A673 (cell line): ENCODE measurements at regions of chr1 and their contacts with region 1.

Region 1: DNA sequence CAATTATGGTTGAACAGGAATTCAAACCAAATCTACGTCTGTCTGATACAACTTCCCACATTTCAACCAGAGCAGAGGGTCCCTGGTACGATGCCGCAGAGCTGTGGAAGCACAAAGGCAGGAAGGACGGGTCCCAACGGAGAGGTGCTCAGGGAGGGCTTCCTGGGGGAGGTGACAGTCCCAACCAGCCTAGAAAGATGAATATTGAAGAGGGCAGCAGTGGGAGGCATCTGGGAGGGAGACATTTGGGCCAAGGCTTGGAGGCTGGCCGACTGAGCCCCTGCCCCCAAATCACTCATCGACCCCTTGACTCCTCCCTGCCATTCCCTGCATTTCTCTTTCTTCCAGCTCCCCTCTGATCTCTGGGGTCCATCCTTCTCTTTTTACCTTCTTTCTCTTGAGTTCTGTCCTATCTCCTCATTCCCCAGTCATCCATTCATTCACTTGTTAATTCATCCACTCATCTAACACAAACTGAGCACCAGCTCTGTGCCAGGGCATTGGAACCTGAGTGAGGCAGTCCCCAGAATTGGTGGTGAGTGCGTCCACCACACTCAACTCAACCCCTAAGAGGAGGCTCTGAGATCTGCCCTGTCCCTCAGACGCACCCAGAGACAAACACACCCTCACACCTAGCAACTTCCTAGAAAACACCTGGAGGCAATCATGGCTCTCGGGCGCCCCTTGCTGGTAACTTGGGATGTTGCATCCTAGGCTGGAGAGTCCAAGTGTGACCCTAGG is 13.2 kb upstream of the CELA3B start:
- DNase-seq: peak; percentile 66
- H3K4me3 ChIP-seq: no peak overlapping the region
- H3K27ac ChIP-seq: no peak overlapping the region
- H3K4me1 ChIP-seq: peaks cover 14% of the 10 kb centered on the region
- H3K27me3 ChIP-seq: no peaks in the 10 kb centered on the region
- CTCF ChIP-seq: peak; percentile 90

Region 2: DNA sequence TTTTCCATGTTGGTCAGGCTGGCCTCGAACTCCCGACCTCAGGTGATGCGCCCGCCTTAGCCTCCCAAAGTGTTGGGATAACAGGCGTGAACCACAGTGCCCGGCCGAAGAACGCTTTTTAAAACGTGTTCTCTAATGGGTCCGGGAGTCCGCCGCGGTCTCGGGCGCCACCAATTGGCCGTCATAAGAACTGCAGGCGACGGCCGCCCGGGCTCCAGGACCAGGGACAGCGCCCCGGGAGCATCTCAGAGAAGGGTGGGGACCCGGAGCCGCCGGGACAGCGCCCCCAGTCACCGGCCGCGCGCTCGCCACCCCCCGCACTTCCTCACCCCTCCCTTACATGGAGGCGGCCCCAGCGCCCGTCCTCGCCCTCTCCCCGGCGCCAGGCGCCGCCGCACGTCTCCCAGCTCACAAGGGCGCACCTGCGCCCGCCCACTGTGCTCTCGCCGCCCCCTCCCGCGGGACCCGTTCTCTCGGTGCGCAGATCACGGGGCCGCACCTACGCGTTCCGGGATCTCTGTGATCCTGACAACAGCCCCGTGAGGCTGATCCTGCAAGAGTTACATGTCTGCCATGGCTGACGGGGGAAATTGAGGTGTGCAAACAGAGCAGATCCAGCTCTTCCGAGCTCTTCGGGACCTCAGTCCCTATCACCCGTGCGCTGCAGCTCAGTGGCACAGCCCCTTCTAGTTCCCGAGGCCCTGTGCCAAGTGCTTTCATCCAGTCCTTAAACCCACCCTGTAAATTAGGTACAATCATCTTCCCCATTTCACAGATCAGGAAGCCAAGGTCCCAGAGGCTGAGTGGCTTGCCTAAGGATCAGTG is 304.3 kb before region 1 on chr1:
- CTCF ChIA-PET with region 1: no interaction called
- POLR2A ChIA-PET with region 1: no interaction called
- intact Hi-C with region 1: loop called (anchors 5 kb)
- DNase-seq: peak; percentile 75
- H3K4me3 ChIP-seq: peak overlapping the region; percentile 29
- H3K27ac ChIP-seq: no peak overlapping the region
- H3K4me1 ChIP-seq: peaks cover 19% of the 10 kb centered on the region
- H3K27me3 ChIP-seq: no peaks in the 10 kb centered on the region
- CTCF ChIP-seq: peak; percentile 88

Region 3: GRCh38 chr1:21703318-21703963 is 260.2 kb before region 1 on chr1:
- CTCF ChIA-PET with region 1: interaction called, 3 read pairs
- POLR2A ChIA-PET with region 1: no interaction called
- intact Hi-C with region 1: loop called (anchors 5 kb)
- DNase-seq: peak; percentile 60
- H3K4me3 ChIP-seq: no peak overlapping the region
- H3K27ac ChIP-seq: peak overlapping the region; percentile 15
- H3K4me1 ChIP-seq: peaks cover 15% of the 10 kb centered on the region
- H3K27me3 ChIP-seq: no peaks in the 10 kb centered on the region
- CTCF ChIP-seq: peak; percentile 59